ENCODE measurements at regions of chr12 and their contacts with region 1.

Region 1: DNA sequence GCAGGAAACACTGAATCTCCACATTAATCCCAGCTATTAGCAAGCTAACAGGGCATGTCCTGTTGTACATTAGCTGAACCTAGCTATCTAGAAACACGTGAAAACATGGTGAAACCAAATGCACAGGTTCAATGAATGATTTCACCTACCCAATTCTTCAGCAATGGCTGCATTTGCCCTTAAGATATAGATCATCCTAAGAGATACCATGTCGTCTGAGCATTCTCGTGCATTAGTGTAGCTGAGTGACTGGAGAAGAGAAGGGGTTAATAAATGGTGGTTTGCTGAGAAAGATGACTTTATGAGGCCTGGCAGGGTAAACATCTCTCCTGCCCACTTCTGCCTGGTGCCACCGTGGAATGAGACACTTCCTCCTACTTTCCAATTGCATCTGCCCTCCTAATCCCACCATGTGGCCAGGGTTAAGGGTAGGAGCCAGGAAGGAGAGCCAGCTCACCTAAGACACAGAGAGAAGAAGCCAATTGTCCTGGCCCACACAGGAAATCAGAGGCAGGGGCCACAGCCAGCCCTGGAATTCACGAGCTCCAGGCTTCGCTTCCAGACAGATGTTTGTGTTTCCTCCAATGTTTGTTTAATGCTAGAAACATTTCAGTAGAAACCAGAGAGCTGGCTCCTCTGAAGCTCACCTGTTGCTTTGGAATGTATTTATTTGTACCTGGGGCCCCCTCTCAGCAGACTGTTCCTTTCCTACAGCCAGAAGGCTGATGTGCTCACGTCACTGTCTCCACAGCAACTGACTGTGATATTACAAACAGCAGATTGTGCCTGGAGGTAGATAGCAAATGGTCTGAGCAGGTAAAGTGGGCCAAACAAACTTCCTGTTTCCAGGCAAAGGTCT is 126.0 kb upstream of the PARP11 start:
- DNase-seq: peak; percentile 77 to 87
- H3K4me3 ChIP-seq: no peak overlapping the region
- H3K27ac ChIP-seq: peak overlapping the region; percentile 79 to 93 (median 90)
- H3K4me1 ChIP-seq: peaks cover 14 to 17% of the 10 kb centered on the region in 2 donors
- H3K27me3 ChIP-seq: no peaks in the 10 kb centered on the region
- CTCF ChIP-seq: no peak
- POLR2A ChIP-seq: peak in 1 of 2 donors; percentile 38

Region 2: DNA sequence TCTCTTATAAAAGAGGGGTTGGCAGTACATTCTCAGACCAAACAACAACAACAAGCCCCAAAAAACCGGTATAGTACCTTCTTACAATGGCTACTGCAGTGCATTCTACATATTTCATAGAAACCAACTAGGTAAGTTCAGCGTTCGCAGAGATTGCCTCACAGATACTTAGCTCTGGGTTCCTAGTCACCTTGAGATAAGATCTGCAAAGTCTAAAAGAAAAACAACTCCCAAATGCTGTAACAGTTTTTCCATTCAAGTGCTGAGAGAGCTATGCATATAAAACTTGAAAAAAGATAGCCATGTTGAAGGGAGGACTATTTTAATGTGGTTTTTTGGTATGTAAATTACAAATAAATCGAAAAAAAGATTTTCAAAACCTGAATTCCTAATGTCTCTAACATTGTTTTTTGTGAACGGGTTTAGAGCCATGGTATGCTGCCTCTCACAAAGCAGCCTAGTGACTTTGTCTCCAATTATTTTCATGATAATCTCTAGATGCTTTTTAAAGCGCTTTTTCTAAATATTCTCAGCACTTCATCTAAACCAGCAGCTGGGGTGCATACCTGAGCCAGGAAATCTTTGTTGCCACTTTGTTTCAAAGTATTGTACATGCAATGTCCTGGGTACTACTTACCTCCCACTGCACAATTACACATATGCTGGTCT is 189.7 kb before region 1 on chr12:
- intact Hi-C with region 1: no loop called
- DNase-seq: no peak
- H3K4me3 ChIP-seq: no peak overlapping the region
- H3K27ac ChIP-seq: no peak overlapping the region
- H3K4me1 ChIP-seq: no peaks in the 10 kb centered on the region
- H3K27me3 ChIP-seq: no peaks in the 10 kb centered on the region
- CTCF ChIP-seq: no peak
- POLR2A ChIP-seq: no peak

Region 3: GRCh38 chr12:3872800-3873636 is 126.2 kb before region 1 on chr12 and contains the start of gene PARP11:
- intact Hi-C with region 1: no loop called
- DNase-seq: peak; percentile 98 to 99
- H3K4me3 ChIP-seq: peak within 1 kb of the TSS; percentile 42 to 75 (median 72)
- H3K27ac ChIP-seq: peak within 1 kb of the TSS; percentile 89 to 92 (median 89)
- H3K4me1 ChIP-seq: peaks cover 13 to 15% of the 10 kb centered on the region in 2 donors
- H3K27me3 ChIP-seq: no peaks in the 10 kb centered on the region
- CTCF ChIP-seq: no peak
- POLR2A ChIP-seq: peak in 1 of 2 donors; percentile 74
- total RNA-seq, gene PARP11: 8.7 to 26.2 (median 15.4) TPM

Region 4: DNA sequence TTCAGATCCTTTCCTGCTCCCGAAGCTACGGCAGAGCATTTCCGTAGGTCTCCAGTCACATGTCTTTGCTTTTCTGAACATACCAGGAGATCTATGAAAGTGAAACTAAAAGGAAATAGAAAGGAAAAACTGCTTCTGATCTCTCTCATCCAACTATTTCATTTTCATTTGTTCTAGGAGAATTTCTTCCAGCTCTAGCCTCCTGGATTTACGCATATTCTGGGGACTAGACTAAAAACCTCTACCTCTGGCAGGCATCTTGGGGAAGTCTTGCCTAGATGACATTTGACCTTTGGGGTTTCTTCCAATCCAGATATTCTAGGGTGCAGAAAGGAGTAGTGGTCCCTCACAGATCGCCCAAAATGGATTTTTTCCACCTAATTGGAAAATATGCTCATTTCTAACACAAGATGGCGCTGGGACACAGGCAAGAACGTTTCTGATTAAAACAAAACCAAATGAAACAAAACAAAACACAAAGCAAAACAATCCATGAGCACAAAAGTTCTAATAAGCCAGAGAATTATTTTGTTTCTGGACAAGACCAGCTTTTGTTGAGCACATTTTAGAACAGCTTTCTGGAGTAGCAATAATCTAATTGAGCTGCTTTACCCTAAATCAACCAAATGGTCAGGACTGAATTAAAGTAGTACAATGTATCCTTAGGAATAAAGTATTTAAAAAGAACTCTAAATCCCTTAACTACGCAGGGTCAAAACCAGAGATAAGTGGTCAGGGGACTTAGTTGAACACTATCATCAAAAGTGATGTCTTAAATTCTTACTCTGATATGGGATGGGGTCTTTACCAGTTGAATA is 113.7 kb before region 1 on chr12:
- intact Hi-C with region 1: loop called (anchors 10 kb)
- DNase-seq: peak in 1 of 2 donors; percentile 28
- H3K4me3 ChIP-seq: peak overlapping the region in 1 of 3 donors; percentile 1
- H3K27ac ChIP-seq: peak overlapping the region in 2 of 3 donors; percentile 44 to 71
- H3K4me1 ChIP-seq: no peaks in the 10 kb centered on the region
- H3K27me3 ChIP-seq: no peaks in the 10 kb centered on the region
- CTCF ChIP-seq: peak in 5 of 6 experiments; percentile 69 to 92 (median 85)
- POLR2A ChIP-seq: no peak

Region 5: GRCh38 chr12:4037747-4038312 is 38.6 kb after region 1 on chr12:
- intact Hi-C with region 1: loop called (anchors 2 kb)
- DNase-seq: peak; percentile 58 to 62
- H3K4me3 ChIP-seq: no peak overlapping the region
- H3K27ac ChIP-seq: no peak overlapping the region
- H3K4me1 ChIP-seq: peaks cover 0 to 5% of the 10 kb centered on the region in 2 donors
- H3K27me3 ChIP-seq: no peaks in the 10 kb centered on the region
- CTCF ChIP-seq: peak; percentile 52 to 89 (median 73)
- POLR2A ChIP-seq: no peak

Measured in thyroid gland (tissue), 4 donors.